Posterior vena cava (tissue), 2 donors: ENCODE measurements at regions of chr4 and their contacts with region 1.

Region 1: DNA sequence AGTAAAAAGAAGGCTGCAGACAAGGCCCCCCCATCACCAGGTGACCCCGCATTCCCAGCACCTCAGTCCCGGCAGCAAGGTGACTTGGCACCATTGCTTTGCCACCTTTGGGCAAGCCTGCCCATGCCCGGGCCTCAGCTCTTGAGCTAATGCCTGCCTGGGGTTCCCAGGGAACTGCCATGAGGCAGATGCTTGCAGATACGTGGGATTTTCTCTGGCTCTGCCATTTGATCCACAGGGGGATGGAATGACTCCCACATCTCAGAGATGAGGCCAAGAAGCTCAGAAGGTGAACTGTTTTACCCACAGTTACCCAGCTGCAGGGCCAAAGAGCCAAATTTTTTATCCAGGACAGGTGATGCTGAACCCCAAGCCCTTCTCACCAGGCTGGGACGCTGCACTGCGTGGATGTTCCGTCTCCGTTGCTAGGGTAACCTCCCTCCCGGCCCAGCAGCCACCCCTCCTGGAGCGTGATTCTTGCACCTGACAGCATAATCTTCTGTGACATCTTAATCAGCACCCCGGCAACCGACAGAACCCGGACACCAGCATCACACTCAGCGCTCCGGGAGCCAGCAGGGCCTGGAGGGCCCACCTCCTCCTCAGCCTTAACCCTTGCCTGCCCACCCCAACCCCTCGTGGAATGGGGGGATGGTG is 15.7 kb upstream of the MSX1 start:
- DNase-seq: no peak

Region 2: GRCh38 chr4:3420606-3420955 is 1423.2 kb before region 1 on chr4:
- intact Hi-C with region 1: loop called in 1 of 2 experiments (anchors 5 kb)
- DNase-seq: peak; percentile 69